ENCODE measurements at regions of chr4 and their contacts with region 1.

Region 1: DNA sequence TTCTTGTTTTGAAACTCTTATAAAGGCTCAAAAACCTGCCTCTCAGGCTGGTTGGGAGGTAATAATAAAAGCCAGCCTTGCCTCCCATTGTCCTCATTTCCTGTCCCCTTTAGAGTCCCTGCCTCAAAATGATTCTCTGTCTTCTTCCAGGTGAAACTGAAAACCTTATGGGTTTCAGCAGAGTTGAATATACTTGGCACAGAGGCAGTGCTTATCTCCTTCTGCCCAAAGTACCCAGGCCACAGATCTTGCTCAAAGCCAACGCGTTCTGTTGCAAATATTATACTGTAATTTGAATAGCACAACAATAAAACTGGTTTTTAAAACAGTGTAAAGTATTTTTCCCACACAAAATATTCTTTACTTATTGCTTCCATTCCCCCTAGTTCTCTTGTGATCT is 183.1 kb upstream of the GIMD1 start:
- DNase-seq: no peak
- H3K4me3 ChIP-seq: no peak overlapping the region
- H3K27ac ChIP-seq: no peak overlapping the region
- H3K4me1 ChIP-seq: no peaks in the 10 kb centered on the region
- H3K27me3 ChIP-seq: no peaks in the 10 kb centered on the region
- CTCF ChIP-seq: no peak

Region 2: DNA sequence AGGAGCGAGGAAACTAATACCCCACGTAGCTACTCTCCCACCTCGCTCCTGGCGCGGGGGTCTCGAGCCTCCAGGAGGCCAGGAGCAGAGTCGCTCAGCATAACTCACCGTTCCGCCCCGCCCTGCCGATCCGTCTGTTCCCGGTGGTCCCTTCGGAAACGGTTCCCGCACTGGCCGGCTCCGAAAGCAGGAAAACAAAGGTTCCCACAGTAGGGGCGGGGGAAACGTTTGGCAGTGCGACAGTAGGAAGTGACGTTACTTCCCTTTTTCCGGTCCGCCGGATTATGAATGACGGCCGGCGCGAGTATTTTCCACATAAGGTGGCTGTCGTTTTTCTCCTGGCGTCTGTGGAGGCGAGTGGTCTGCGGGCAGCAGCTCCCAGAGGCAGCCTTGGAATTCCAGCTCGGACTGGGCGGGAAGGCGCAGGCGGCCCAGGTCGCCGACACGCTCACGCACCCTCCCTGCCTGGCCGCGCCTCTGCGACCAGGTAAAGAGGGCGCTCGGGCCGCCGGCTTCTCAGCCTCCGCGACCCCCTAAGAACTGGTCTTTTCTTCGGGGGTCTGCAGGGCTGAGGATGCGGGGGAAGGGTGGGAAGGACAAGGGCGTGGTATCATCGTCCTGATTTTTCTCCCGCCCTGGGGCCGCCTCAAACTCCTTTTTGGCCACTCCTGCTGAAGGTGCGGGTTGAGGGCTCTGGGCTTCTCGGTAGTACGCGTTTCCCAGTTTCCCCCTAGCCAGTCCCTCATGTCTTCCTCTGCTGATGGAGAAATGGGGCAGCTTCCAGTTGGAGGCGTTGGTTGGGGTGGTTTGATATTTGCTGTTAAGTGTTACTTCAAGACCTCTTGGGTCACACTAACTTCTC is 843.0 kb before region 1 on chr4 and contains the starts of genes GSTCD and INTS12:
- CTCF ChIA-PET with region 1: no interaction called
- dilution Hi-C with region 1: no loop called
- in situ Hi-C with region 1: no loop called
- intact Hi-C with region 1: no loop called
- DNase-seq: peak; percentile 91
- H3K4me3 ChIP-seq: peak within 1 kb of the TSS; percentile 75 to 78 (median 77)
- H3K27ac ChIP-seq: peak within 1 kb of the TSS; percentile 82
- H3K4me1 ChIP-seq: peaks cover 16% of the 10 kb centered on the region
- H3K27me3 ChIP-seq: no peaks in the 10 kb centered on the region
- CTCF ChIP-seq: peak in 1 of 2 donors; percentile 2
- total RNA-seq, gene GSTCD: 20.3 to 22.5 TPM
- total RNA-seq, gene INTS12: 22.2 to 29.8 TPM

Region 3: DNA sequence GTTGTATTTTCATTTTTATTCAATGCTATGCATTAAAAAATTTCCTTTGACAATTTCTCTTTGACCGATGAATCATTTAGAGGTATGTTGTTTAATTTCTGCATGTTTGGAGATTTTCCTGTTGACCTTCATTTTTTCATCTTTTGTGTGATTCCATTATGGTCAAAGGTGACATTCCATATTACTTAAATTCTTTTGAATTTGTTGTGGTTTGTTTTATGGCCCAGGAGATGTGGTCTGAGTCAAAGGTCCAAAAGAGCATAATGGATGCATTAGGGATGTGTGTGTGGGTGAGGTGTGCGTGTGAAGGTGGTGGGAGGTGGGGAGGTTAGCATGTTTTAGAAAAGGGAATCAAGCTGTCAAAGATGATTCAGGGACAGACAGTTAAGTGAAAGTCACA is 107.2 kb before region 1 on chr4:
- CTCF ChIA-PET with region 1: no interaction called
- dilution Hi-C with region 1: no loop called
- in situ Hi-C with region 1: no loop called
- intact Hi-C with region 1: no loop called
- DNase-seq: peak; percentile 16
- H3K4me3 ChIP-seq: no peak overlapping the region
- H3K27ac ChIP-seq: no peak overlapping the region
- H3K4me1 ChIP-seq: no peaks in the 10 kb centered on the region
- H3K27me3 ChIP-seq: no peaks in the 10 kb centered on the region
- CTCF ChIP-seq: no peak

Region 4: DNA sequence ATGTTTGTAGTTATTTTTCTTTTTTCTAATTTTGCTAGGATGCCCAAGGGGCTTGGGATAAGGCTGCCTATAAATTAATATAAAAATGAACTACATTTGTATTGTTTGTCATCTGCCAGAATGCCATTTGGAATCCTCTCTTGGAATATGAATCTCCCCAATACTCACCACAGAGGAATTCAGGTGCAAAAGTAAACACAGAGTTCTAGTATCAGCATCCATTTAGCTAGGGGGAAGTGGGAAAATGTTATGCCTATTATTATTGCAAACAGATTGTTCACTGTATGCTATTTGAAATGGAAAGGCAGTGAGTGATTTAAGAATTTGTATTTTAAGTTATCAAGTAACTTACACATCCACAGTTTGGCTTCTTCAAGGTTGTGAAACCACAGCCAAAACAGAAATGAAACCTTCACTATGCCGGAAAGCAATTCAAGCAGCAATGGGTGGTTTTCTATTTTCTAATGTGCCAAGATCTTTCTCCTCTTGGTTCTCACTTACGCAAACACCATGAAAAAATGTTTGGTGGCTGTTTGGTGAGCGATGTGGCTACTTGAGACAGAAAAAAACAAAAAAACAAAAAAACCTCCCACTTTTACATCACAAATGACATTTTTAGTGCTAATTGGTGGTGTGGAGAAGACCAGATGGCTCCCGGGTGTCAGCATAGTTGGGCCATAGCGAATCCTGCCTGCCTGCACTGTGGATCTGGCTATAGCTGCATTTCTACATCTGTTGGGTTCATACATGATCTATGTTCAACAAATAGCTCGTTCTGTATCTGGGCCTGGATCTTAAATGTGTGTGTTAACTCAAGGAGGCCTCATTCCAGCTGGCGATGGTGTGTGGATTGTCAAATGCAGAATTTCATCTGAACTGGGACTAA is 17.7 kb after region 1 on chr4:
- CTCF ChIA-PET with region 1: no interaction called
- dilution Hi-C with region 1: no loop called
- in situ Hi-C with region 1: no loop called
- intact Hi-C with region 1: loop called (anchors 1 kb)
- DNase-seq: no peak
- H3K4me3 ChIP-seq: no peak overlapping the region
- H3K27ac ChIP-seq: no peak overlapping the region
- H3K4me1 ChIP-seq: peaks cover 15% of the 10 kb centered on the region
- H3K27me3 ChIP-seq: no peaks in the 10 kb centered on the region
- CTCF ChIP-seq: no peak